Motor neuron (in vitro differentiated cells): ENCODE measurements at regions of chr14 and their contacts with region 1.

Region 1: GRCh38 chr14:100662879-100663760 is 63.6 kb upstream of the DLK1 start:
- ATAC-seq: peak in 6 of 8 experiments; percentile 20 to 81 (median 44)
- H3K4me3 ChIP-seq: no peak overlapping the region
- H3K27ac ChIP-seq: no peak overlapping the region
- H3K4me1 ChIP-seq: peaks cover 14 to 32% of the 10 kb centered on the region in 2 donors

Region 2: DNA sequence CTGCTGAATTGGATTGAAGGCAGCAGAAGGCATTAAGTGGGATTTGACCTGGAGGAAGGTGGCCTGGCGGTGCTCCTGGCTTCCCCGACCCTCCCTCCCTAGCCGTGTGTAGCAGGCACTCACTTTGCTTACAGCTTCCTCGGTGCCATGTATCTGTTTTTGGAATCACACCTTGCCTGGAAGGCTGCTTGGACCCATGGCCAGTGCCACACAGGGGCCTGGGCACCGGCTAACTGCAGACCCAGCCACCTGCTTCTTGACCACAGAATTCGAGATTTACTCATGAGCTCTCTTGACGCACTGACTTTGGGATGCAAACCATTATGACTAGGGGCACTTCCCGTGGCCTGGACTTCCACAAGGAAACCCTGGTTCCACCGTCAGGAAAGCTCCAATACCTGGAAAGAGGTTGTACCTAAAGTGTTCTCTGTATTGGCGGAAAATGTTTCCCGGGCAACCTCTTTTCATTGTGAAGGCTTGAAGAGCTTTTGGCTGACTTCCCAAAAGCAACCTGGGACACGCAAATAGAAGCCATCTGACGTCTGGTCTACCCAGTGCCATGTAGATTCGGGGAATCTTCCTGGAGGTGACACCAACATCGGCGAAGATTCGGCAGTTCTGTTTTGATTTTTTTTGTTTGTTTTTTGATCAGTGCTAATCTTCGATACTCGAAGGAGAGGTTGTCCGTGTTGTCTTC is 366.0 kb after region 1 on chr14:
- in situ Hi-C with region 1: no loop called
- ATAC-seq: no peak
- H3K4me3 ChIP-seq: no peak overlapping the region
- H3K27ac ChIP-seq: no peak overlapping the region
- H3K4me1 ChIP-seq: no peaks in the 10 kb centered on the region

Region 3: DNA sequence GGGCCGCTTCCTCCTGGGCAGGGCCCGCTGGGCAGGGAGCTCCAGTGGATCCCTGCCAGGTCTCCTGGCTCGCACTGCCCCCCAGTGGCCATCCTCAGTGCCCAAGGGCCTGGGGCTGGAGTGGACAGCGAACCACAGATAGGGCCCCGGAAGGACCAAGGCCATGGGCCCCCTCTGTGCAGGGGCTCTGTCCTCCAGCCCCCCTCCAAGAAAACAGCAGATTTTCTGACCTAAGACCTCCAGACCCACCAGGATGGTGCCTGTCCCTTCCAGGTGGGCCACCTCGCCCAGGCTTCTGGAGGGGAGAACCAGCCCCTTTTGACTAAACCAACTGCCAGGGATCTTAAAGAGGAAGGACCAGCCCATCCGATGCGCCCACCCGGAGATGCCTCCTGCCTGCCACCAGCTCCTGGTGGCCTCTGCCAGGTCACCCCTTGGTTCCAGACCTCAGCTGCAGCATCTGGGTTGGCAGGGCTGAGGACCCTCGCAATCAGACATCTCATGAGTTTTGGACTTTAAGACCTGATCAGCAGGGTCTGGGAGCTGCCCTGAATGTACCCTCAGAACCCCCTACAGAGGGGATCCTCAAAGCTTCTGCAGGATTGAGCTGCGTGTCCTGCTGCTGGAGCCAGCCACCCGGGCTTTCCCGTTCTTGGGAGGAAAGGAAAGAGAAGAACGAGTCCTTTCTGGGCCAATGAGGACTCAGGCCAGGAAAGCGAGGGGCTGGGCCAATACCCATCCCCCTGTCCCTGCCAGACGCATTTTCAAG is 572.4 kb after region 1 on chr14:
- in situ Hi-C with region 1: loop called in 1 of 9 experiments (anchors 25 kb)
- ATAC-seq: peak; percentile 86 to 100 (median 88)
- H3K4me3 ChIP-seq: no peak overlapping the region
- H3K27ac ChIP-seq: no peak overlapping the region
- H3K4me1 ChIP-seq: peaks cover 28 to 29% of the 10 kb centered on the region in 2 donors

Region 4: GRCh38 chr14:101557811-101558738 is 895.0 kb after region 1 on chr14:
- in situ Hi-C with region 1: no loop called
- ATAC-seq: no peak
- H3K4me3 ChIP-seq: peak overlapping the region in 1 of 5 donors; percentile 41
- H3K27ac ChIP-seq: no peak overlapping the region
- H3K4me1 ChIP-seq: peaks cover 2 to 21% of the 10 kb centered on the region in 2 donors